ENCODE measurements at regions of chr12 and their contacts with region 1.

Region 1: GRCh38 chr12:121536899-121537813 is 43.7 kb downstream of the KDM2B start:
- DNase-seq: peak; percentile 31 to 74 (median 51)
- ATAC-seq: peak in 1 of 2 donors; percentile 5
- H3K4me3 Mint-ChIP-seq: peak overlapping the region; percentile 72 to 92 (median 78)
- H3K27ac Mint-ChIP-seq: peak overlapping the region; percentile 85 to 99 (median 95)
- H3K4me1 Mint-ChIP-seq: peaks cover 19 to 66% (median 51%) of the 10 kb centered on the region in 4 donors
- H3K27me3 Mint-ChIP-seq: no peaks in the 10 kb centered on the region

Region 2: GRCh38 chr12:121417847-121418246 is 119.3 kb before region 1 on chr12:
- POLR2A ChIA-PET with region 1: no interaction called
- DNase-seq: no peak
- ATAC-seq: no peak
- H3K4me3 Mint-ChIP-seq: no peak overlapping the region
- H3K27ac Mint-ChIP-seq: peak overlapping the region in 2 of 10 donors; percentile 69 to 81
- H3K4me1 Mint-ChIP-seq: peaks cover 11 to 29% (median 15%) of the 10 kb centered on the region in 4 donors
- H3K27me3 Mint-ChIP-seq: no peaks in the 10 kb centered on the region

Region 3: GRCh38 chr12:121499929-121500793 is 37.0 kb before region 1 on chr12:
- POLR2A ChIA-PET with region 1: interaction called, 12 read pairs
- DNase-seq: peak; percentile 47 to 84 (median 72)
- ATAC-seq: peak; percentile 88 to 90
- H3K4me3 Mint-ChIP-seq: no peak overlapping the region
- H3K27ac Mint-ChIP-seq: peak overlapping the region in 2 of 10 donors; percentile 66 to 67
- H3K4me1 Mint-ChIP-seq: peaks cover 8 to 36% (median 23%) of the 10 kb centered on the region in 4 donors
- H3K27me3 Mint-ChIP-seq: no peaks in the 10 kb centered on the region

Region 4: GRCh38 chr12:121590476-121591143 is 53.5 kb after region 1 on chr12:
- POLR2A ChIA-PET with region 1: interaction called, 17 read pairs
- DNase-seq: peak; percentile 25 to 92 (median 70)
- ATAC-seq: peak; percentile 72 to 80
- H3K4me3 Mint-ChIP-seq: peak overlapping the region; percentile 65 to 91 (median 89)
- H3K27ac Mint-ChIP-seq: peak overlapping the region; percentile 95 to 99 (median 98)
- H3K4me1 Mint-ChIP-seq: peaks cover 13 to 40% (median 40%) of the 10 kb centered on the region in 4 donors
- H3K27me3 Mint-ChIP-seq: peaks cover 0 to 2% (median 0%) of the 10 kb centered on the region in 5 donors